CD8-positive, alpha-beta memory T cell (primary cell): ENCODE measurements at regions of chr10 and their contacts with region 1.

Region 1: GRCh38 chr10:133329491-133330202 is 7.0 kb downstream of the CALY start:
- DNase-seq: peak; percentile 76 to 87 (median 81)
- H3K4me3 ChIP-seq: no peak overlapping the region
- H3K4me3 Mint-ChIP-seq: peak overlapping the region in 4 of 7 donors; percentile 15 to 75 (median 50)
- H3K27ac ChIP-seq: no peak overlapping the region
- H3K27ac Mint-ChIP-seq: peak overlapping the region in 2 of 8 donors; percentile 19 to 83
- H3K4me1 ChIP-seq: peaks cover 20% of the 10 kb centered on the region
- H3K4me1 Mint-ChIP-seq: peaks cover 5 to 21% (median 11%) of the 10 kb centered on the region in 3 donors
- H3K27me3 ChIP-seq: peaks cover 39% of the 10 kb centered on the region
- H3K27me3 Mint-ChIP-seq: peaks cover 15 to 42% of the 10 kb centered on the region in 2 donors

Region 2: DNA sequence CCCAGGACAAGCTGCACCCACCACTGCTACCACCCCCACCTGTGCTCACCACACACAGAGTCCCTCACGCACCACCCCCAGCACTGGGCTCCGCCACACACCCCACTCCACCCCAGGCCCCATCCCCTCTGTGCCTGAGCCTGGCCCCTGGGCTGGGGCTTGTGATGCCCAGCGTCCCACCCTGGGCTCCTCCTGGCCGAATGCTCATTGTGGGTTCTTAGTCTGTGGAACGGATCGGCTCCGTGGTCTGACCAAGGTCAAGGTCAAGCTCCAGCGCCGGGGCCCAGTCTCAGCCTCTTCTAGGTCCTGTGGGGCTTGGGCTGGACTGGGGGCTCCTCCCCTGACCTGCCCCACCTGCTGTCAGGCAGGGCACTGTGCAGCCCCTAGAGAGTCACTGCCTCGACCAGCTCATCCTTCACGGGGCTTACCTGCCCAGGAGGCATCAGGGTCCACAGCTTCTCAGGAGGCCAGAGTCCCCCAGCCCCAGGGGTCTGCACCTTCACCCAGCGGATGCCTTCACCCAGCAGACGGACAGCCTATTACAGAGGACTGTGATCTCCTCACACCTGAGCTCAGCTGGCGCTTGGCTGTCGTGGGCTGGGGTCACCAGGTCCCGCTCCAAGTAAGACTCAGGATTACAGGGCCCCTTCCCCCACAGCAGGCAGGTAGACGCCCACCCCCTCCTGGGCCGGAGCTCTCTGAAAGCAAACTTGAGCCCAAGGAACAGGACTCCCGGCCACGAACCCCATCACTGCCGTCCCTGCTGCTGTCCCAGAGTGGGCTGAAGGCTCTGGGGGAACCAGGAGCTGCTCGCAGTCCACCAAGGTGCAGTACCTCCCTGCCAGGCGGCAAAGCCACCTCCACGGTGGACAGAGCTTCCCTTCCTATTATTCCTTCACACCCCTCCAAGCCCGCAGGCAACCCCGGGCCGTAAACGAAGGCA is 114.9 kb before region 1 on chr10:
- CTCF ChIA-PET with region 1: no interaction called
- POLR2A ChIA-PET with region 1: no interaction called
- DNase-seq: no peak
- H3K4me3 ChIP-seq: no peak overlapping the region
- H3K4me3 Mint-ChIP-seq: no peak overlapping the region
- H3K27ac ChIP-seq: no peak overlapping the region
- H3K27ac Mint-ChIP-seq: peak overlapping the region in 1 of 8 donors; percentile 38
- H3K4me1 ChIP-seq: no peaks in the 10 kb centered on the region
- H3K4me1 Mint-ChIP-seq: peaks cover 0 to 5% (median 0%) of the 10 kb centered on the region in 3 donors
- H3K27me3 ChIP-seq: no peaks in the 10 kb centered on the region
- H3K27me3 Mint-ChIP-seq: peaks cover 6 to 10% of the 10 kb centered on the region in 2 donors

Region 3: DNA sequence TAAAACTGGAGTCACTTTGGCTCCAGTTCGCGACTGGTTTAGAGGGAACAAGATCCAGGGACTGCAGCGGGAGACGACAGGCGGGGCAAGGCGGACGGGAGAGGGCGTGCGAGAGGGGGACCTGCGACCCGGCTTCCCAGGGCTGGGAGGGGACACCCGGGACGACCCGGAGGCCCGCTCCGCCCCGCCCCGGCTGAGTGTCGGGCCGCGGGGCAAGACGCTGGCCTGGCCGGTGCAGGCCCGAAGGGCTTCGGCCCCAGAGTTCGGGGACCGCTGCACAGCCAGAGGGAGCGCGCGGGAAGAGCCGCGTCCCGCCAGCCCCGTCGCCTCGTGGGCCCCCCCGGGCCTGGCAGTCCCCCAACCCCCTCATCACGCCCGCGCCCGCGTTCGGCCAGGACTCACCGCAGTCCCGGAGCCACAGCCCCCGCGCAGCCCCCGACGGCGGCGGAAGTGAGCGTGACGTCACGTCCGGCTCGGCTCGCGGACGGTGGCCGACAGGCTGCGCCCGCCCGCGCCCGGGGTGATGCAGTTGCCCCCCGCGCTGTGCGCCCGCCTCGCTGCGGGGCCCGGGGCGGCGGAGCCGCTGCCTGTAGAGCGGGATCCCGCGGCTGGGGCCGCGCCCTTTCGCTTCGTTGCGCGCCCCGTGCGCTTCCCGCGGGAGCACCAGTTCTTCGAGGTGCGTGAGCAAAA is 21.1 kb before region 1 on chr10 and contains the starts of genes TUBGCP2 and ZNF511:
- CTCF ChIA-PET with region 1: interaction called, 17 read pairs
- POLR2A ChIA-PET with region 1: no interaction called
- DNase-seq: peak; percentile 85 to 95 (median 94)
- H3K4me3 ChIP-seq: peak within 1 kb of the TSS; percentile 88
- H3K4me3 Mint-ChIP-seq: peak within 1 kb of the TSS; percentile 94 to 99 (median 99)
- H3K27ac ChIP-seq: peak within 1 kb of the TSS; percentile 99
- H3K27ac Mint-ChIP-seq: peak within 1 kb of the TSS; percentile 98 to 100 (median 100)
- H3K4me1 ChIP-seq: peaks cover 18% of the 10 kb centered on the region
- H3K4me1 Mint-ChIP-seq: peaks cover 30 to 41% (median 30%) of the 10 kb centered on the region in 3 donors
- H3K27me3 ChIP-seq: no peaks in the 10 kb centered on the region
- H3K27me3 Mint-ChIP-seq: peaks cover 0 to 7% of the 10 kb centered on the region in 2 donors
- total RNA-seq, gene TUBGCP2: 67.9 to 68.1 TPM
- total RNA-seq, gene ZNF511: 82.2 to 83.2 TPM

Region 4: GRCh38 chr10:133318494-133319127 is 11.0 kb before region 1 on chr10:
- CTCF ChIA-PET with region 1: interaction called, 17 read pairs
- POLR2A ChIA-PET with region 1: interaction called, 3 read pairs
- DNase-seq: peak; percentile 56 to 77 (median 61)
- H3K4me3 ChIP-seq: peak overlapping the region; percentile 34
- H3K4me3 Mint-ChIP-seq: peak overlapping the region in 6 of 7 donors; percentile 43 to 74 (median 66)
- H3K27ac ChIP-seq: no peak overlapping the region
- H3K27ac Mint-ChIP-seq: peak overlapping the region in 1 of 8 donors; percentile 22
- H3K4me1 ChIP-seq: no peaks in the 10 kb centered on the region
- H3K4me1 Mint-ChIP-seq: peaks cover 5 to 12% (median 6%) of the 10 kb centered on the region in 3 donors
- H3K27me3 ChIP-seq: no peaks in the 10 kb centered on the region
- H3K27me3 Mint-ChIP-seq: peaks cover 5 to 11% of the 10 kb centered on the region in 2 donors

Region 5: DNA sequence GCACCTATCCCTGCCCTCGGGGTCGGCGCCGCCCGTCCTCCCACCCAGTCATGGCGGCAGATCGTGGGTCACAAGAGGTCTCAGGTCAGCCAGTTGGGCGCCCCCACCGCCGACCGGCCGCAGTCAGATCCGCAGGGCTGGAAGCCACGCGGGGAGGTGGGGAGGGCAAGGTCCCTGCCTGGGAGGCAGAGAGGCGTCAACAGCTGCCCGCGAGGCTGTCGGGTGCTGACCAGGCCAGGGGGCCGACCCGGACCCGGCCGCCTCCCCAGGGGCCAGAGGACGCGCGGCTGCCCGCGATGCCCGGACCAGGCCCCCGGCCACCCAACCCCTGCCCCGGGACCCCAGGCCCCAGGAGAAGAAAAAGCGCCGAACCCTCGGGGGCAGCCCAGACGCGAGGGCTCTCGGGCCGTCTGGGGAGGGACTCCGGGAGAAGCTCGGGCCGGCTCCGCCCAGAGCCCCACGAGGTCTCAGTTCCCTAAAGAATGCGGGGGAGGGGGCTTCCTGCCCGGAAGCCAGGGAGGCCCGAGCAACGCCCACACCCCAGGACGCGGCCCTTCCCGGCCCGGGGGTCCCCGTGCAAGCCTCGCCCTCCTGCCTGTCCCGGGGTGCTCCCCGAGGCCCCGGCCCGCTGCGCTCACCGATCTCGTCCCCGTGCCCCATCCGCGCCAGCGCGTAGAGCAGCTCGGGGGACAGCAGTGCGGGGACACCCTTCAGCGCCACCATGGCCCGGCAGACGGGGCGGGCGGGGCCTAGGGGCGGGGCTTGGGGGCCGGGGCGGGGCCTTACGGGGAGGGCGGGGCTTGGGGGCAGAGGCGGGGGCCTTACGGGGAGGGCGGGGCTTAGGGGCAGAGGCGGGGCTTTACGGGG is 27.9 kb after region 1 on chr10 and contains the start of gene FUOM:
- CTCF ChIA-PET with region 1: interaction called, 19 read pairs
- POLR2A ChIA-PET with region 1: no interaction called
- DNase-seq: peak; percentile 62 to 84 (median 74)
- H3K4me3 ChIP-seq: peak within 1 kb of the TSS; percentile 59
- H3K4me3 Mint-ChIP-seq: peak within 1 kb of the TSS; percentile 61 to 89 (median 76)
- H3K27ac ChIP-seq: peak within 1 kb of the TSS; percentile 38
- H3K27ac Mint-ChIP-seq: peak within 1 kb of the TSS in 3 of 8 donors; percentile 10 to 55 (median 41)
- H3K4me1 ChIP-seq: peaks cover 6% of the 10 kb centered on the region
- H3K4me1 Mint-ChIP-seq: peaks cover 9 to 37% (median 25%) of the 10 kb centered on the region in 3 donors
- H3K27me3 ChIP-seq: no peaks in the 10 kb centered on the region
- H3K27me3 Mint-ChIP-seq: peaks cover 0 to 1% of the 10 kb centered on the region in 2 donors
- total RNA-seq, gene FUOM: 34.6 to 39.8 TPM

Region 6: GRCh38 chr10:133438711-133439273 is 109.1 kb after region 1 on chr10:
- CTCF ChIA-PET with region 1: interaction called, 11 read pairs
- POLR2A ChIA-PET with region 1: no interaction called
- DNase-seq: peak in 1 of 5 donors; percentile 22
- H3K4me3 ChIP-seq: no peak overlapping the region
- H3K4me3 Mint-ChIP-seq: peak overlapping the region in 5 of 7 donors; percentile 1 to 33 (median 12)
- H3K27ac ChIP-seq: no peak overlapping the region
- H3K27ac Mint-ChIP-seq: peak overlapping the region in 4 of 8 donors; percentile 13 to 56 (median 32)
- H3K4me1 ChIP-seq: peaks cover 7% of the 10 kb centered on the region
- H3K4me1 Mint-ChIP-seq: peaks cover 29 to 33% (median 33%) of the 10 kb centered on the region in 3 donors
- H3K27me3 ChIP-seq: no peaks in the 10 kb centered on the region
- H3K27me3 Mint-ChIP-seq: peaks cover 10 to 12% of the 10 kb centered on the region in 2 donors

Region 7: GRCh38 chr10:133520155-133520738 is 190.6 kb after region 1 on chr10:
- CTCF ChIA-PET with region 1: interaction called, 21 read pairs
- POLR2A ChIA-PET with region 1: no interaction called
- DNase-seq: peak; percentile 80 to 89 (median 86)
- H3K4me3 ChIP-seq: peak overlapping the region; percentile 32
- H3K4me3 Mint-ChIP-seq: peak overlapping the region; percentile 35 to 80 (median 50)
- H3K27ac ChIP-seq: no peak overlapping the region
- H3K27ac Mint-ChIP-seq: peak overlapping the region in 5 of 8 donors; percentile 13 to 45 (median 38)
- H3K4me1 ChIP-seq: peaks cover 10% of the 10 kb centered on the region
- H3K4me1 Mint-ChIP-seq: peaks cover 10 to 18% (median 14%) of the 10 kb centered on the region in 3 donors
- H3K27me3 ChIP-seq: no peaks in the 10 kb centered on the region
- H3K27me3 Mint-ChIP-seq: peaks cover 0 to 4% of the 10 kb centered on the region in 2 donors